ENCODE measurements at regions of chr12 and their contacts with region 1.

Region 1: DNA sequence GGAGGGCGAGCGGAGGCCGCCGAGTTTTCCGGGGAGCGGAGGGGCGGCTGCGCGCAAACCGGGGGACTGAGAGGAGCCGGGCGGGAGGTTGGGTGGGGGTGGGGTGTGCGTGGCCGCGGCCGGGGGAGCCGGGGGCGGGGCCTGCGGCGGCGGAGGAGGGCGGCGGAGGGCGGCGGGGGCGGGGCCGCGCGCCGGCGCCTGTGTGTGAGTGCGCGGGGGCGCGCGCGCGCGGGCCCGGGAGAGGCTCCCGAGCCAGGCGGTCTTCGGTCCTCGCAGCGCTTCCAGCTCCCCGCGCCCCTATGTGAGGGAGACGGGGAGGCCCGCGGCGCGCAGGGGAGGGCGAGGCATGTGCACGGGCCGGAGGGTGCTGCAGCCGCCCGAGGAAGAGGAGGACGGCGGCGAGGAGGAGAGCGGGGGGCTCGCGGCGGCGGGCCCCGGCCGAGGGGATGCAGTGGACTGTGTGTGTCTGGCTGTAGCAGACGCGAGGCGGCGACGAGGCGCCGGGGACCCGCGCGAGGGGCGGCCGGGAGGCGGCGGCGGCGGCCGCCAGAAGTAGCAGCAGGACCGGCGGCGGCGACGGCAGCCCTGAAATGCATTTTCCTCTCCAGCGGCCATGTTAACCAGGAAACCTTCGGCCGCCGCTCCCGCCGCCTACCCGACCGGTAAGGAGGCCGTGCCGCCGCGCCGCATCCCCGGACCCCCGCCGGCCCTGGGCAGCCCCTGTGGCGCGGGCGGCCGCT is at the start of gene DYRK2:
- H3K4me3 Mint-ChIP-seq: peak within 1 kb of the TSS; percentile 91
- H3K27ac Mint-ChIP-seq: peak within 1 kb of the TSS; percentile 86
- H3K4me1 Mint-ChIP-seq: peaks cover 40% of the 10 kb centered on the region
- H3K27me3 Mint-ChIP-seq: peaks cover 16% of the 10 kb centered on the region

Region 2: GRCh38 chr12:67268896-67269631 is 379.6 kb before region 1 on chr12 and contains the start of gene CAND1:
- intact Hi-C with region 1: loop called (anchors 5 kb)
- H3K4me3 Mint-ChIP-seq: peak within 1 kb of the TSS; percentile 79
- H3K27ac Mint-ChIP-seq: peak within 1 kb of the TSS; percentile 97
- H3K4me1 Mint-ChIP-seq: peaks cover 30% of the 10 kb centered on the region
- H3K27me3 Mint-ChIP-seq: no peaks in the 10 kb centered on the region

Region 3: GRCh38 chr12:67592216-67593011 is 56.3 kb before region 1 on chr12:
- intact Hi-C with region 1: no loop called
- H3K4me3 Mint-ChIP-seq: no peak overlapping the region
- H3K27ac Mint-ChIP-seq: no peak overlapping the region
- H3K4me1 Mint-ChIP-seq: peaks cover 5% of the 10 kb centered on the region
- H3K27me3 Mint-ChIP-seq: peaks cover 1% of the 10 kb centered on the region

Measured in dendritic cell treated with granulocyte-macrophage colony-stimulating factor and Interleukin-4, amounts not matched to agents 40 ng/mL and 50 ng/mL, for 4 days (primary cell).